Natural killer cell (primary cell): ENCODE measurements at regions of chr2 and their contacts with region 1.

Region 1: DNA sequence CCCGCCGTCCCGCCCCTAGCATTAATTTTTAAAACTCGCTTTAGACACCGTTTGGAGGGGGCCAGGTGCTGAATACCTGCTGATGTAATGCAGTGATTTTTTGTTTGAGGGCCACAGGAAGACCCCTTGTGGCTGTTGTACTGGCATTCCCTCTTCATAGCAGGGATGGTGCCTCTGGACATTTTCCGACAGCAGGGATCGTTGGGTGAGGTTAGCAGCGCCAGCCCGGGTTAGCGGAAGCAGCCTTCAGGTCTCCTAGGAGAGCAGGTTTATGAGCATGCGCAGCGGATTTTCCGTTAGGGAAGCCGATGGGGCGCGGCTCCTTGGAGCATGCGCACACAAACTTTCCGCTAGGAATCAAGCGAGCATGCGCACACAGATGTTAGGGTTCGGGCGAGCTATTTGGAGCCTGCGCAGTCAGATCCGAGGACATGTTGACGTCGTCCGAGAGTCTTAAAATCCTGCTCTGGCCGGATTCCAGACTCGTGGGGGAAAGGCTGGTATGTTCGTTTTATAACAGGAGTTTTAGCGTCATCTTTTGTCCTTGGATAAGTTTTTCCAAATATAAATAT is 17.2 kb upstream of the C2orf74 start:
- DNase-seq: peak; percentile 84 to 99
- ATAC-seq: peak; percentile 85 to 96 (median 93)
- H3K4me3 ChIP-seq: peak overlapping the region; percentile 65
- H3K4me3 Mint-ChIP-seq: peak overlapping the region; percentile 95
- H3K27ac ChIP-seq: peak overlapping the region; percentile 76
- H3K27ac Mint-ChIP-seq: peak overlapping the region; percentile 94 to 96
- H3K4me1 ChIP-seq: peaks cover 13% of the 10 kb centered on the region
- H3K4me1 Mint-ChIP-seq: peaks cover 6% of the 10 kb centered on the region in 2 donors
- H3K27me3 ChIP-seq: no peaks in the 10 kb centered on the region
- H3K27me3 Mint-ChIP-seq: no peaks in the 10 kb centered on the region
- CTCF ChIP-seq: no peak

Region 2: GRCh38 chr2:61176755-61177726 is 32.3 kb after region 1 on chr2:
- intact Hi-C with region 1: loop called (anchors 2 kb)
- DNase-seq: peak; percentile 80 to 94
- ATAC-seq: peak; percentile 77 to 91 (median 84)
- H3K4me3 ChIP-seq: peak overlapping the region; percentile 97
- H3K4me3 Mint-ChIP-seq: peak overlapping the region; percentile 92
- H3K27ac ChIP-seq: peak overlapping the region; percentile 98
- H3K27ac Mint-ChIP-seq: peak overlapping the region; percentile 79 to 97
- H3K4me1 ChIP-seq: peaks cover 46% of the 10 kb centered on the region
- H3K4me1 Mint-ChIP-seq: peaks cover 46 to 61% of the 10 kb centered on the region in 2 donors
- H3K27me3 ChIP-seq: no peaks in the 10 kb centered on the region
- H3K27me3 Mint-ChIP-seq: no peaks in the 10 kb centered on the region
- CTCF ChIP-seq: no peak

Region 3: DNA sequence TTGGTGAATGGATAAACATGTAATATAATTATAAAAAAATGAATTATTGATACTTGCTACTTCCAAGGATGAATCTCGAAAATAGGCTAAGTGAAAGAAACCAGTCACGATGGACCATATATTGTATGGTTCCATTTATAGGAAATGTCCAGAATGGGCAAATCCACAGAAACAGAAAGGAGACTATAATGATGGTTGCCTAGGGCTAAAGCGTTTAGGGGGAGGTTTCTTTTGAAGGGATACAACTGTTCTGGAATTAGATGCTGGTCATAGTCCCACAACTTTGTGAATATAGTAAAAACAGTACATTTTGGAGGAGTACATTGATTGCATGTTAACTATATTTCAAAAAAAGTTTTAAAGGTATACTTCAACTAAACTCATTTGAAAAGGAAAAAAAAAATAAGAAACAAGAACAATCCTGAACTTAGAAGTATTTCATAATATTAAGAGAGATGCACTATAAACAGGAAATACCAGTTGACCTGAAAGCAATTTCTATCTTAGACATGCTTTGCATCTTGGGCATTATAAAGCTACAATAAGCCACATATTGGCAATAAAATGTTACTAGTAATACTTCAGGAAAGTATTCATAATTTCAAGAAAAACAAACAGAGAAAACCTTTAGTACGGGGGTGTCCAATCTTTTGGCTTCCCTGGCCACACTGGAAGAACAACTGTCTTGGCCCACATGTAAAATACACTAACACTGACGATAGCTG is 147.2 kb after region 1 on chr2:
- intact Hi-C with region 1: no loop called
- DNase-seq: no peak
- ATAC-seq: no peak
- H3K4me3 ChIP-seq: no peak overlapping the region
- H3K4me3 Mint-ChIP-seq: no peak overlapping the region
- H3K27ac ChIP-seq: no peak overlapping the region
- H3K27ac Mint-ChIP-seq: peak overlapping the region in 1 of 2 donors; percentile 47
- H3K4me1 ChIP-seq: no peaks in the 10 kb centered on the region
- H3K4me1 Mint-ChIP-seq: peaks cover 11 to 15% of the 10 kb centered on the region in 2 donors
- H3K27me3 ChIP-seq: no peaks in the 10 kb centered on the region
- H3K27me3 Mint-ChIP-seq: no peaks in the 10 kb centered on the region
- CTCF ChIP-seq: no peak

Region 4: GRCh38 chr2:61566566-61566965 is 421.8 kb after region 1 on chr2:
- intact Hi-C with region 1: no loop called
- DNase-seq: no peak
- ATAC-seq: no peak
- H3K4me3 ChIP-seq: no peak overlapping the region
- H3K4me3 Mint-ChIP-seq: no peak overlapping the region
- H3K27ac ChIP-seq: no peak overlapping the region
- H3K27ac Mint-ChIP-seq: no peak overlapping the region
- H3K4me1 ChIP-seq: no peaks in the 10 kb centered on the region
- H3K4me1 Mint-ChIP-seq: no peaks in the 10 kb centered on the region
- H3K27me3 ChIP-seq: peaks cover 2% of the 10 kb centered on the region
- H3K27me3 Mint-ChIP-seq: peaks cover 0 to 7% of the 10 kb centered on the region in 2 donors
- CTCF ChIP-seq: no peak